ENCODE measurements at regions of chr2 and their contacts with region 1.

Region 1: GRCh38 chr2:67186871-67187270 is 210.3 kb upstream of the ETAA1 start:
- DNase-seq: no peak
- ATAC-seq: no peak
- H3K4me3 ChIP-seq: no peak overlapping the region
- H3K4me3 Mint-ChIP-seq: no peak overlapping the region
- H3K27ac ChIP-seq: no peak overlapping the region
- H3K27ac Mint-ChIP-seq: no peak overlapping the region
- H3K4me1 ChIP-seq: no peaks in the 10 kb centered on the region
- H3K4me1 Mint-ChIP-seq: no peaks in the 10 kb centered on the region
- H3K27me3 ChIP-seq: no peaks in the 10 kb centered on the region
- H3K27me3 Mint-ChIP-seq: no peaks in the 10 kb centered on the region
- CTCF ChIP-seq: no peak

Region 2: DNA sequence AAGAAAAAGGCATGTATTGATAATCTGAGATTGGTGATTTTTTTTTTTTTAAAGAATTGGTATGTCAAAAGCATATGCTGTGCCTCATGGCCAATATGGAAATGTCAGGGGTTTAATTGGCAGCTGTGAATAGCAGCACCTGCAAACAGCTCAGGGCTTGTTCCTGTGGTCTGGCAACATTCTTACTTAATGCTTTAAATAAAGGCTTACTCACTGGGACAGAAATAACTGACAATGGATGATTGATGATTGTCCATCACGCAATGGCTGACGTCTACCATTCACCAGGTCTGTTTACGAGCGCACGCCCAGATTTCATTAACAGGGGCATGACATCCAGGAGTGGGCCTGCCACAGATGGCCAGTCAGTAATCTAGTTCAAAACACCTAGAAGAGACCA is 276.9 kb after region 1 on chr2:
- CTCF ChIA-PET with region 1: no interaction called
- POLR2A ChIA-PET with region 1: no interaction called
- intact Hi-C with region 1: loop called in 1 of 2 experiments (anchors 10 kb)
- DNase-seq: no peak
- ATAC-seq: no peak
- H3K4me3 ChIP-seq: no peak overlapping the region
- H3K4me3 Mint-ChIP-seq: no peak overlapping the region
- H3K27ac ChIP-seq: no peak overlapping the region
- H3K27ac Mint-ChIP-seq: no peak overlapping the region
- H3K4me1 ChIP-seq: no peaks in the 10 kb centered on the region
- H3K4me1 Mint-ChIP-seq: no peaks in the 10 kb centered on the region
- H3K27me3 ChIP-seq: no peaks in the 10 kb centered on the region
- H3K27me3 Mint-ChIP-seq: peaks cover 11% of the 10 kb centered on the region
- CTCF ChIP-seq: no peak

Region 3: GRCh38 chr2:68230241-68231060 is 1043.6 kb after region 1 on chr2:
- CTCF ChIA-PET with region 1: no interaction called
- POLR2A ChIA-PET with region 1: no interaction called
- intact Hi-C with region 1: no loop called
- DNase-seq: no peak
- ATAC-seq: no peak
- H3K4me3 ChIP-seq: no peak overlapping the region
- H3K4me3 Mint-ChIP-seq: peak overlapping the region; percentile 2
- H3K27ac ChIP-seq: no peak overlapping the region
- H3K27ac Mint-ChIP-seq: peak overlapping the region; percentile 16
- H3K4me1 ChIP-seq: peaks cover 22% of the 10 kb centered on the region
- H3K4me1 Mint-ChIP-seq: peaks cover 88% of the 10 kb centered on the region
- H3K27me3 ChIP-seq: no peaks in the 10 kb centered on the region
- H3K27me3 Mint-ChIP-seq: no peaks in the 10 kb centered on the region
- CTCF ChIP-seq: no peak

Measured in CD4-positive, alpha-beta T cell (primary cell).